Left cardiac atrium (tissue), 4 donors: ENCODE measurements at regions of chr5 and their contacts with region 1.

Region 1: DNA sequence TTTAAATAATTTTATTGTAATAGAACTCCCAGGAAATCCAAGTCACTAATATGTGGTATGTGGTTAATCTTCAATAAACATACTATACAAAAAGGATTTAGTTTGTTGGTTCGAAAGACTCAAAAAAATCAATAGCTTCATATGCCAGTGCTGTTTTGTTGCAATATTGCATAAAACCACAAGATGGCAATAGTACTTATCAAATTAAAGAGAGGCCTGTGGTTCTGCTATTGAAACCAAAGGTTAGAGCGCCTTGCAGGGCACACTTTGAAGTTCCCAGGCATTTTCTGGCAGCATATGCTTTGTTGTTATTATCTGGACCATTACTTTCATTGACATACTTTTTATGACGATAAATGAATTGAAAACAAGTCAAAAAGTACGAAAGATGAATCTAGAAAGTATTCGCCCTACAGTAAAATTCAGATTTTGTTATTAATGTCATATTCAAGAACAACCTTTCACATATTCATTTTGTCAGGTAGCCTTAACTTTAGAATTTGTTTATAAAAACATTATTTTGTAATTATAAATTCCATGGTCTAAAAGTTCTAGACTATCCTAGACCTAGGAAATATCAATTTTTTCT is 316.3 kb downstream of the MCTP1 start:
- DNase-seq: no peak
- ATAC-seq: peak; percentile 53 to 65

Region 2: GRCh38 chr5:95022967-95023695 is 54.5 kb after region 1 on chr5:
- intact Hi-C with region 1: no loop called
- DNase-seq: no peak
- ATAC-seq: no peak

Region 3: DNA sequence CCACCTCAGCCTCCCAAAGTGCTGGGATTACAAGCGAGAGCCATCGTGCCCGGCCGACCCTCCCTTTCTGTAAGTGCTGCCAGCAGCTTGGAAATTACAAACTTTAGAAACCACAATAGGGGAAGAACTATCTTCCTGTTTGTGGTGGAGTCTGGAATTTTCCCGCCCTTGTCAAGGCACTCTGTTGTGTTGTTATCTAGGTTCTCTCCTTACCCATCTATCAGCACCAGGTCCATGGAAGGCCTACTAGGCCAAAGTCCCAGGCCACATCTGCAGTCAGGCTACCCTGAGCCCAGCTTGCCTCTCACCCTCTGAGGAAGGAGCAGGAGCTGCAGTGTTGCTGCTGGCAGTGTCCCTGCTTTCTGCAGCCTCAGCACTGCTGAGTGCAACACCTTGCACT is 101.3 kb after region 1 on chr5:
- intact Hi-C with region 1: no loop called
- DNase-seq: no peak
- ATAC-seq: peak in 1 of 2 donors; percentile 47

Region 4: GRCh38 chr5:95081500-95081960 is 112.9 kb after region 1 on chr5:
- intact Hi-C with region 1: no loop called
- DNase-seq: peak; percentile 33
- ATAC-seq: peak; percentile 27 to 86

Region 5: DNA sequence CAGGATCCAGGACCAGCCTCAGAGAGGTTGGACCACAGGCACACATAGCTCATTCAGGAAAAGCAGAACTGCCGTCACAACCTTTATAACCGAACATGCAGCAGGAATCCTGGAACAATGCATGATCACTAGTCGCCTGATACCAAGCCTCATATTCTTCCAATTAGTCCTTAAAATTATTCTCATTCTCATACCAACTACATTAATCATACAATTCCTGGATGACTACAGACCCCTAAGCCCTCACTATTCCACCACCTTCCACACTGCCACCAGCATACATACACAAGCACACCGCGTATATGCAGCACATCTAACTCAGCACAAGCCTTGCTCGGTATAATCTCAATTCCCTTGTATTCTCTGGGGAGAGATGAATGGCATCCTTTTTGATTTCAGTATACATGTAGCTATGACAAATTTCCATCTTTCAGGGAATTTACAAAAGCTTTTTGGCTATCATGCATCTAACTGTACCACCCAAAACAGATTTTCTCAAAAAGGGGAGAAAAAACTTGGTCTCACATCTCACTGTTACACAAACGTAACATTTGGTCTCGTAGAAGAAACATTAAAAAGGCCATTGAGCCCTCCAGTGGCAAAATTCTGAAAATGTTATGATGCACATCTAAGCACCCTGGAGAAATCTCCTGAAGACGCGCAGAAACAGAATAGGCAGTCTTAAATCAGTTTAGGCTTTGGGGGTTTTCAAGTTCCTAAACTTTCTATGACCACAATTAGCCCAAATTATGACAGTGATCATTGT is 270.1 kb after region 1 on chr5:
- intact Hi-C with region 1: loop called in 1 of 2 experiments (anchors 5 kb)
- DNase-seq: no peak
- ATAC-seq: no peak

Region 6: DNA sequence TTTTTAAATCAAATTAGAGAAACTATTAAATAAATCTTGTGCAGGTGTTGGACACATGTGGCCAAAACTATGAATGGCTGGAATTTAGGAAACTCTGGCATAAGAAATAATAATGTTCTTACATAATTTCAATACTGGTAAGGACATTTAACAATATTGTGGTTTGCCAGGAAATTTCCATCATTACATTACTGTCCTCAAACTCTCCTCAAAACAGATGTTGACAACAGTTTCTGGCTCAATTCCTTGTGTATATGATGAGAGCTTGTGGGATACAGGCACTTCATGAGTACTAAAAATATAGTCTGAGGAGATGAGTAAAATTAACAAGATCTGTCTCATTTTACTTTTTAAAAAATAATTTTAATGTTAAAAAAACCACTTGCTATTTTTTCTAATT is 288.4 kb after region 1 on chr5:
- intact Hi-C with region 1: loop called in 1 of 2 experiments (anchors 10 kb)
- DNase-seq: no peak
- ATAC-seq: no peak